ENCODE measurements at regions of chr22 and their contacts with region 1.

Region 1: DNA sequence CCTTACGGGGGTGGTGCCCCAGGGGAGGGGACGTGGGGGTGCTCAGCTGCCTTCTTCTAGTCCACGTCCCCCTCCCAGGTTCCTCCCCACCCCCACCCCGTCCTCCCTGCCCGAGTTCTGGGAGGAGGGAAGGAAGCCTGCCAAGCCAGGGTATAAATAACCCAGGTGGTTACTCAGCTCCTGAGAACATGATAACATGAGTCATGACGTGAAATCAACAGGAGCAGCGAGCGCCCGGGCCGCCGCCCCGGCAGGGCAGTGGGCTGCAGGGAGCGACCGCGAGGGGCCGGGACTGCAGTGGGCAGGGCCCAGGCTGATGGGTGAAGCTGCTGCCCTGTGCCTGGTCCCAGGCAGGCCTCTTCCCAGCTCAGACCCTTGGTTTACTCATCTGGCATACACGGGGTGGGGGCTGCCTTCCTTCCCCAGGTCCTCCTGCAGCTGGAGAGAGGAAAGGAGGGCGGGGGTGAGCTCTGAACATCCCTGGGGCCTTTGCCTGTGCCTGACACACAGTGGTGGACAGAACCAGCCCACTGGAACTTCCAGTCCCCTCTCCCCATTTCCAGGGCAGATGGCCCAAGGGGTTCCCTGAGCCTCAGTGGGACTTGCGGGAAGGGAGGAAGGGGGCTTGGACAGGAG is 8.8 kb upstream of the PDGFB start:
- DNase-seq: peak; percentile 55
- ATAC-seq: peak; percentile 48
- H3K4me3 Mint-ChIP-seq: peak overlapping the region; percentile 22
- H3K27ac Mint-ChIP-seq: no peak overlapping the region
- H3K4me1 Mint-ChIP-seq: peaks cover 16% of the 10 kb centered on the region
- H3K27me3 Mint-ChIP-seq: peaks cover 30% of the 10 kb centered on the region

Region 2: DNA sequence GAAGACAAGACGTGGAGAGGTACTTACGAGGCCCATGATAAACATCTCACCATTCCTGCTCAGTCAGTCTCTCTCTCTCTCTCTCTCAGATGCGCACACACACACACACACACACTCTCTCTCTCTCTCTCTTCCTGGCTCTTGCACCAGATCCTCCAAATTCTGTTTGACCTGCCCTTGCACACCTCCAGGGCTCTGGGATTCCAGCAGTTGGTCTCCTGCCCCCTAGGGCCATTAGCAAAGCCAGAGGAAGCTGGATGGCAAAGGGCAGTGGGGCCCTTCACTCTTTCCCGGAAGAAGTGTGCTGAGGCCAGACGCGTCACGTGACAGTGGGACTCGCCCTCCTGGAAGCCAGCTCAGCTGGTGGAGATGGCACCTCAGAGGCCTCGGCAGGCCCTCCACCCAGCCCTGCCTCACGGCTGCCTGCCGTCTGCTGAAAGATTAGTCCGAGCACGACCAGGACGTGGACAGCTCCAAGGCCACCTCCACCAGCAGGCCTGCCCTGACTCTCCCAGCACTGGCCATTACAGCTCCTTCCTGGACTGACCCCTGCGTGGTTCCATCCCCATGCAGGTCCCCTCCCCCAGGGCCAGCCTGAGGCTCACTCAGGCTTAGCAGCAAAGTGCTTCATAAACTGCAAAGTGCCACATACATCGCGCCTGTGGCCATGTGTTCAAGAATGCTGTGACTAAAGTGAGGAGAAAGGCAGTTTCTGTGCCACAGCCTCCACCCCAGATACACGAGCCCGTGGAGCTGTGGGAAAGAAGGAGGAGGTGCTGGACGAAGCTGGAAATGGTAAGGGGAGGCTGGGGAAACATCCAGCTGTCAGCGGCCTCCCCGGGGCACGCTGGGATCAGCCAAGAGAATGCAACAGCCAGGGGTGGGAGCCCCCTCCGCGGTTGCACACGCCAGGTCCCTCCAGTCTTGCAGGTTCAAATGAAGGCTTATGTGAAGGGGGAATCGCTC is 12.4 kb before region 1 on chr22:
- POLR2A ChIA-PET with region 1: interaction called, 10 read pairs
- DNase-seq: peak; percentile 52
- ATAC-seq: no peak
- H3K4me3 Mint-ChIP-seq: peak overlapping the region; percentile 73
- H3K27ac Mint-ChIP-seq: peak overlapping the region; percentile 43
- H3K4me1 Mint-ChIP-seq: peaks cover 32% of the 10 kb centered on the region
- H3K27me3 Mint-ChIP-seq: peaks cover 72% of the 10 kb centered on the region

Region 3: DNA sequence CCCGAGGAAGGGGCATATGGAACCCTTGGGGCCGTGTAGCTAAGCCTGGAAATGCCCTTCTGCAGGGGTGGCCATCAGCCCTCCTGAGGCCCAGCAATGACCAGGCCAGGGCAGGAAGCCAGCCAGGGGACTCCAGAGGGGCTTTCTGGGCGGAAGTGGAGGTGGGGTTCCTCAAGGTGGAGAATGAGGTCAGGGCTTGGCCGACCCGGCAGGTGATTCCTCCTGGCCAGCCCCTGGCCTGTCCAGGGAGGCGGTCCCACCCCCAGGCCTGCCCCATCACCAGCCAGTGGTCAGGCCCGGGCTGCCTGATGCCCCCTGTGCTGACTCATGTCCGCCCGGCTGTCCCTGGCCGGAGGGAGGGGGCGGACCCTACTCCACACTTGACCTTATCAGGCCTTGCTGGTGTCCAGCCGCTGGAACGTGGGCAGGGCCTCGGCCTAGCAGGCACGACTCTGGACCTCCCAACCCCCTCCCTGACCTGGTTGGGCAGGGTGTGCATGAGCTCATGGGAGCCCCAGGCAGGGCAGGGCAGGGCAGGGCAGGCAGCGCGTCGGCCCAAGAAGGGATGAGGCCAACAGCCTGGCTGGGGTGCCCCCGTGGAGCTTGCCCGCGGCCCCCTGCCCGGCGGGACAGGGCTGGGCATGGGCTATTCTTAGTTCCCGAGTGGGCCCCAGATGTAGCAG is 29.9 kb after region 1 on chr22:
- POLR2A ChIA-PET with region 1: no interaction called
- DNase-seq: no peak
- ATAC-seq: no peak
- H3K4me3 Mint-ChIP-seq: no peak overlapping the region
- H3K27ac Mint-ChIP-seq: no peak overlapping the region
- H3K4me1 Mint-ChIP-seq: peaks cover 3% of the 10 kb centered on the region
- H3K27me3 Mint-ChIP-seq: peaks cover 22% of the 10 kb centered on the region

Region 4: DNA sequence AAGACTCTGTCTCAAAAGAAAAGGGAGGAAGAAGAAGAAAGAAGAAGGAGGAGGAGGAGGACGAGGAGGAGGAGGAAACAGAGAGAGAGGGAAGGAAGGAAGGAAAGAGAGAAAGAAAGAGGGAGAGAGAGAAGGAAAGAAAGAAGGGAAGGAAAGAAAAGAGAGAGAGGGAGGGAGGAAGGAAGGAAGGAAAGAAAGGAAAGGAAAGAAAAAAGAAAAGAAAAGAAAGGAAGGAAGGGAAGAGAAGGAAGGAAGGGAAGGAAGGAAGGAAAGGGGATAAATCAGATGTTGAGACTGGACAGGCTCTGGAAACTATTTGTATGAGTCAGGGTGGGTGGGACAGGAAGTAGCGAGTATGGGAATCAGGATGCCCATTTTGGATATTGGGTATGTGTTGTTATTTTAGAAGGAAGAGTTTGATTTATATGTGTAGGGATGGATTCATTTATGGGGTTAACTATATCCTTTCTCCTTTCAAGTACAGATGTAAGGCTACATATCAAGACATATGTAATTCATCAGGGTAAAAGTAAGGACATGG is 71.9 kb after region 1 on chr22:
- POLR2A ChIA-PET with region 1: no interaction called
- DNase-seq: no peak
- ATAC-seq: no peak
- H3K4me3 Mint-ChIP-seq: no peak overlapping the region
- H3K27ac Mint-ChIP-seq: no peak overlapping the region
- H3K4me1 Mint-ChIP-seq: peaks cover 4% of the 10 kb centered on the region
- H3K27me3 Mint-ChIP-seq: no peaks in the 10 kb centered on the region